OCI-LY7 (cell line): ENCODE measurements at regions of chr9 and their contacts with region 1.

Region 1: GRCh38 chr9:130860458-130861316 is 25.6 kb downstream of the ABL1 start:
- DNase-seq: no peak
- H3K4me3 ChIP-seq: no peak overlapping the region
- H3K27ac ChIP-seq: no peak overlapping the region
- H3K4me1 ChIP-seq: no peaks in the 10 kb centered on the region
- CTCF ChIP-seq: no peak

Region 2: GRCh38 chr9:130461218-130461630 is 399.5 kb before region 1 on chr9:
- CTCF ChIA-PET with region 1: no interaction called
- POLR2A ChIA-PET with region 1: no interaction called
- intact Hi-C with region 1: loop called (anchors 5 kb)
- DNase-seq: peak; percentile 66
- H3K4me3 ChIP-seq: no peak overlapping the region
- H3K27ac ChIP-seq: no peak overlapping the region
- H3K4me1 ChIP-seq: no peaks in the 10 kb centered on the region
- CTCF ChIP-seq: peak; percentile 79

Region 3: GRCh38 chr9:130712564-130713285 is 148.0 kb before region 1 on chr9:
- CTCF ChIA-PET with region 1: no interaction called
- POLR2A ChIA-PET with region 1: interaction called, 3 read pairs
- intact Hi-C with region 1: loop called (anchors 2 kb)
- DNase-seq: peak; percentile 97
- H3K4me3 ChIP-seq: peak overlapping the region; percentile 81
- H3K27ac ChIP-seq: peak overlapping the region; percentile 72
- H3K4me1 ChIP-seq: peaks cover 25% of the 10 kb centered on the region
- CTCF ChIP-seq: no peak

Region 4: DNA sequence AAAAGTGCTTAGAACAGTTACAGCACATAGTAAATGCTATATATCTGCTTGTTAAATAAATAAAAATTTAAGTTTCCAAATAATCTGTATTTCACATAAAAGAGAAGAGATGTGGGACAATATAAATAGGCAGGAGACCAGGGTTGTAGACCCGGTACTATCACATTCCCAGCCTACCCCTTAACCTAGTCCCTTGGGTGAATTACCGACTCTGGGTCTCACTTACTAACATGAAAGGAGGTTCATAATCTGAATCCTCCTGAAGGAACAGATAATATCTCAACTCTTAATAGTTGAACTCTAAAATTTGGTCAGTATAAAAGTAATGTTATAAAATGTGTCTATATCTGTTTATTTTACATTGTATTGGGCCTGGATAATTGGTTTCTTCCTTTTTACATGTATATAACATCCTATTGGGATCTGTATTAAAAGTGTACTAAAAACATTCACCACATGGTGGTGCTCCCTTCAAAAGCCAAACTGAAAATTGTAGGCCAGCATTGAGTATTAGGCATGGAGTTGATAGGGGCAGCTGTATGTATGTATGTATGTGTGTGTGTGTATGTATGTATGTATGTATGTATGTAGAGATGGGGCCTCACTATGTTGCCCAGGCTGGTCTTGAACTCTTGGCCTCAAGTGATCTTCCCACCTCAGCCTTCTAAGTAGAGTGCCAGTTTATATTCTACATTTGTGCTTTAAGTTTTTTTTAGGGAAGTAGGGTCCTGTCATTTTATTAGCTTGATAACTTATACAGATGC is 89.8 kb before region 1 on chr9:
- CTCF ChIA-PET with region 1: no interaction called
- POLR2A ChIA-PET with region 1: no interaction called
- intact Hi-C with region 1: loop called (anchors 1 kb)
- DNase-seq: peak; percentile 49
- H3K4me3 ChIP-seq: no peak overlapping the region
- H3K27ac ChIP-seq: no peak overlapping the region
- H3K4me1 ChIP-seq: peaks cover 8% of the 10 kb centered on the region
- CTCF ChIP-seq: peak; percentile 80